Posterior vena cava (tissue), 2 donors: ENCODE measurements at regions of chr12 and their contacts with region 1.

Region 1: DNA sequence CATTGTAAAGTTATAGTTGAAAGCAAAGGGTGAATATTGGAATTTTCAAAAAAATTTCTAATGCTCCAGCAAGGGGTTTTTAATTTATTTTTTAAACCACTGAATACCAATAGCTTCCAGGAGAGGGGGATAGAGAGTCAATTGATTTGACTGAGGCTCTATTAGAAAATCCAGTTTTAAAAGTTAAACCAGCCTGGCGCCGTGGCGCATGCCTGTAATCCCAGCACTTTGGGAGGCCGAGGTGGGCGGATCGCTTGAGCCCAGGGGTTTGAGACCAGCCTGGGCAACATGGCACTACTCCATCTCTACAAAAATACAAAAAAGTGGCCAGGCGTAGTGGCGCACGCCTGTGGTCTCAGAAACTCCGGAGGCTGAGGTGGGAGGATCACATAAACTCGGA is 150.1 kb downstream of the SLC38A4 start:
- DNase-seq: no peak

Region 2: GRCh38 chr12:46237371-46238045 is 438.2 kb before region 1 on chr12:
- intact Hi-C with region 1: loop called in 1 of 2 experiments (anchors 5 kb)
- DNase-seq: no peak

Region 3: GRCh38 chr12:46933947-46934346 is 258.2 kb after region 1 on chr12:
- intact Hi-C with region 1: loop called (anchors 10 kb)
- DNase-seq: no peak